A549 (cell line): ENCODE measurements at regions of chr12 and their contacts with region 1.

Region 1: GRCh38 chr12:55817346-55818139 is at the starts of genes ORMDL2 and SARNP:
- DNase-seq: peak; percentile 99 to 100
- ATAC-seq: peak; percentile 97
- H3K4me3 ChIP-seq: peak within 1 kb of the TSS; percentile 90
- H3K27ac ChIP-seq: peak within 1 kb of the TSS; percentile 95 to 96
- H3K4me1 ChIP-seq: peaks cover 26% of the 10 kb centered on the region
- CTCF ChIP-seq: no peak
- EP300 ChIP-seq: no peak
- POLR2A ChIP-seq: peak; percentile 83
- RAD21 ChIP-seq: no peak
- polyA plus RNA-seq, gene ORMDL2: 93.6 and 138 TPM in 2 replicates
- polyA plus RNA-seq, gene SARNP: 164 and 198 TPM in 2 replicates

Region 2: DNA sequence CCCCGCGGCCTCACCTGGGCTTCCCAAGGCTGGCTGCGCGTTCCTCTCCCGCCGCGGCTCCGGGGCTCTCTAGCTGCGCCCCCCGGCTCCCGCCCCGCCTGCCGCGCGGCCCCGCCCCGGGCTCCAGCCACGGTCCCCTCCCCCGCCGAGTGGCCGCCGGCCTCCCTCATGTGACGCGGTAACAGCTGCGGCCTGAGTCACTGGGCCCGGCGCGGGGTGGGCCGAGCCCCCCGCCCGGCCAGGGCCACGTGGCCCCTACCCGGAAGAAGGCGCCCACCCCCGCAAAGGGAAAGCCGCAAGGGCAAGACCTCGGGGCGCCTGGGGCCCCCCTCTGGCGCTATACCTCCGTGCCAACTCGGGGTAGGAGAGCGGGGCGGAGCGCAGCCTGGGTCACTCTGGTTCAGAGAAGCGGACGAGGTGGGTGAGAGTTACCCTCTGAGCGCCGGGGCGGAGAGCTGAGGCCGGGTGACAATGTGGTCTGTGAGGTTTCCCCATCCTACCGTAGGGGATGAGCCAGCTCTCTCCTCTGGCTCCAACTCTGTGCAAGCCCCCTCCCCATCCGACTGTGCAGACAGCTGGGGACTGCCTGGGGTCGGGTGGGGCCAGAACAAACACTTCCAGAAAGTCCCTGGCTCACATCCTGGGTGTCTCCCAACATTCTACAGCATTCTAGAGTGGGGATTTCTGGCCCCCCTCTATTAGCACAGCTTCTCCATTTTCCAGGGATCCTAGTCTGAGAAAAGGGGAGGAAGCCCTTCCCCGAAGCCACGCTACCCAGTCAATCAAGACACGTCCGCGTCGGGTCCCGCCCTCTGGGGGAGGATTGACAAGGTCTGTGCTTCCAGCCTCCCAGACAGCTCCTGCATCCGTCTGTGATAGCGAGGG is 88.4 kb before region 1 on chr12 and contains the start of gene CD63:
- CTCF ChIA-PET with region 1: interaction called, 4 read pairs
- POLR2A ChIA-PET with region 1: interaction called, 11 read pairs
- DNase-seq: peak; percentile 91 to 98
- ATAC-seq: peak; percentile 78 to 87
- H3K4me3 ChIP-seq: peak within 1 kb of the TSS; percentile 76
- H3K27ac ChIP-seq: peak within 1 kb of the TSS; percentile 97
- H3K4me1 ChIP-seq: peaks cover 34% of the 10 kb centered on the region
- CTCF ChIP-seq: no peak
- EP300 ChIP-seq: peak in 1 of 2 experiments; percentile 26; a peak in 1 of 5 replicates
- POLR2A ChIP-seq: peak; percentile 46
- RAD21 ChIP-seq: no peak
- polyA plus RNA-seq, gene CD63: 512 and 724 TPM in 2 replicates

Region 3: DNA sequence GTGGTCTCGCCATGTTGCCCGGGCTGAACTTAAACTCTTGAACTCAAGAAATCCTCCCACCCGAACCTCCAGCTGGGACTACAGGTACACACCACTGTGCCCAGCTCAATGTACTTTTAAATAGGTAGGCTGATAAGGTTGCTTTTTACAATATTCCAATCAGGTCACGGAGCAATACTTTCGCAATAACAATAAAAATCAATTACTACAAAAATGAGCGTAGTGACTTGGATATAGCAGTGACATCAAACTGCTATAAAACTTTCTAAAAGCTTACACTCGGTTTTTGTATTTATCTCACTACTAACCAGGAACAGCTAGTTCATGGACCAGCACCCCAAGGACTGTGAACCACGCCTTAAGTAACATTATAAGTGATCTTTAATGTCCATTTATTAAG is 10.6 kb before region 1 on chr12:
- CTCF ChIA-PET with region 1: interaction called, 14 read pairs
- POLR2A ChIA-PET with region 1: interaction called, 8 read pairs
- DNase-seq: no peak
- ATAC-seq: no peak
- H3K4me3 ChIP-seq: no peak overlapping the region
- H3K27ac ChIP-seq: no peak overlapping the region
- H3K4me1 ChIP-seq: no peaks in the 10 kb centered on the region
- CTCF ChIP-seq: no peak
- EP300 ChIP-seq: no peak
- POLR2A ChIP-seq: no peak
- RAD21 ChIP-seq: no peak

Region 4: DNA sequence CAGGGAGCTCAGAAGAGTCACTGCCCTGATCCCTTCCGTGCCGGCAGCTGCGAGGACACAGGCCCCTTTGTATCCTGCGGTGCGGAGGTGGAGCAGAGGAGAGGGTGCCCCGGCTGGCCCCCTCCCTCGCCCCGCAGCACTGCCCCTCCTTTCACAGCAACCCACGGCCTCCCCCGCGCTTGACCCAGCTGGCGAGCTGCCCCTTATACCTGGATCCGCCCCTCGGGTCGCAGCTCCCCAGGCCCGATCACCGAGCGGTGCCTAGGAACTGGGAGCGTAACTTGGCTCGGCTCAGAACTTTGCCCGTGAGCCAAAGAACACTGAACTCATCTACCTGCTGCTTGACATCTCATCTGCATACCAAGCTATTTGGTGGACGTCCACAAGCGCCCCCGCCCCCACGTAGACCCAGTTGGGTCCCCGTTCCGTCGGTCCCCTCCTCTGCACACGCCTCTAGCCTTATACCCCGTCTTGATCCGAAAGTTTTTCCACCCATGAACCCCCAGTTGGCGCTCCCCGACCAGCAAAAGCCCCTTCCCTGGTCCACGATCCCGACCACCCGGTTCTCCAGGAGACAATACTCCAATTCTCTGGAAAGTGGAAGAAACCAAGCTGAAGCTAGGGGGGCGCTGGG is 12.5 kb after region 1 on chr12:
- CTCF ChIA-PET with region 1: interaction called, 4 read pairs
- POLR2A ChIA-PET with region 1: interaction called, 84 read pairs
- DNase-seq: peak; percentile 23 to 28
- ATAC-seq: peak; percentile 65 to 74
- H3K4me3 ChIP-seq: peak overlapping the region; percentile 80
- H3K27ac ChIP-seq: peak overlapping the region; percentile 89 to 91
- H3K4me1 ChIP-seq: peaks cover 28% of the 10 kb centered on the region; the same call in 2 of the 3 replicates
- CTCF ChIP-seq: no peak
- EP300 ChIP-seq: no peak
- POLR2A ChIP-seq: peak; percentile 22; the same call in 1 of the 2 replicates
- RAD21 ChIP-seq: no peak; a peak in 1 of 5 replicates

Region 5: GRCh38 chr12:55926738-55927587 is 109.4 kb after region 1 on chr12:
- CTCF ChIA-PET with region 1: interaction called, 16 read pairs
- POLR2A ChIA-PET with region 1: interaction called, 12 read pairs
- DNase-seq: peak; percentile 97
- ATAC-seq: peak; percentile 80 to 86
- H3K4me3 ChIP-seq: peak overlapping the region; percentile 89
- H3K27ac ChIP-seq: peak overlapping the region; percentile 94 to 96
- H3K4me1 ChIP-seq: peaks cover 33% of the 10 kb centered on the region
- CTCF ChIP-seq: peak; percentile 94
- EP300 ChIP-seq: no peak; a peak in 1 of 5 replicates
- POLR2A ChIP-seq: peak; percentile 62
- RAD21 ChIP-seq: peak; percentile 14 to 43; a peak in 2 of 5 replicates

Region 6: GRCh38 chr12:55932551-55932910 is 115.0 kb after region 1 on chr12:
- CTCF ChIA-PET with region 1: interaction called, 16 read pairs
- POLR2A ChIA-PET with region 1: interaction called, 12 read pairs
- DNase-seq: peak in 1 of 2 experiments; percentile 32
- ATAC-seq: peak in 1 of 2 experiments; percentile 2; a peak in 2 of 6 replicates
- H3K4me3 ChIP-seq: peak overlapping the region; percentile 54
- H3K27ac ChIP-seq: peak overlapping the region; percentile 74 to 88; a peak in 5 of 6 replicates
- H3K4me1 ChIP-seq: peaks cover 40% of the 10 kb centered on the region
- CTCF ChIP-seq: no peak
- EP300 ChIP-seq: no peak
- POLR2A ChIP-seq: no peak
- RAD21 ChIP-seq: no peak

Region 7: DNA sequence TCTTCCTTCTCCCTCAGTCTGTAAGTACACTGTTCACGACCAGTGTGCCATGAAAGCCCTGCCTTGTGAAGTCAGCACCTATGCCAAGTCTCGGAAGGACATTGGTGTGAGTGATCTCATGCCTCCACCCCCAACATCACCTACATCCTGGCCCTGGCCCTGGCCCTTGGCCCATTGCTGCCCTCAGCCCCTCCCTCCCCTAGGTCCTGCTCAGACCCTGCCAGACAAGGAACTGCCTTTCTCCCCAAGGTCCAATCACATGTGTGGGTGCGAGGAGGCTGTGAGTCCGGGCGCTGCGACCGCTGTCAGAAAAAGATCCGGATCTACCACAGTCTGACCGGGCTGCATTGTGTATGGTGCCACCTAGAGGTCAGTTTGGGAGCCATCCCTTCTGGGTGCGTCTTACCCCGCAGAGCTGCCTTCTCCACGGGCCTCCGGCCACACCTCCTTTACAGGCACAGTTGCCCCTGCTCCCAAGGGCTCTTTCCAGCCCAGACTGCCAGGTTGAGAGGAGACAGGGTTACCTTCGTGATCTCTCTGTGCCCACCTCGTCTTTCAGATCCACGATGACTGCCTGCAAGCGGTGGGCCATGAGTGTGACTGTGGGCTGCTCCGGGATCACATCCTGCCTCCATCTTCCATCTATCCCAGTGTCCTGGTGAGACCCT is 122.7 kb after region 1 on chr12:
- CTCF ChIA-PET with region 1: interaction called, 13 read pairs
- POLR2A ChIA-PET with region 1: no interaction called
- DNase-seq: peak; percentile 87
- ATAC-seq: peak; percentile 96 to 100
- H3K4me3 ChIP-seq: no peak overlapping the region
- H3K27ac ChIP-seq: peak overlapping the region in 1 of 2 experiments; percentile 62; a peak in 3 of 6 replicates
- H3K4me1 ChIP-seq: peaks cover 8% of the 10 kb centered on the region; the same call in 1 of the 3 replicates
- CTCF ChIP-seq: peak; percentile 92
- EP300 ChIP-seq: no peak
- POLR2A ChIP-seq: no peak
- RAD21 ChIP-seq: peak; percentile 82 to 85